AG04450 (cell line): ENCODE measurements at regions of chr2 and their contacts with region 1.

Region 1: GRCh38 chr2:170997893-170998597 is 69.0 kb downstream of the GORASP2 start:
- DNase-seq: no peak
- H3K4me3 ChIP-seq: no peak overlapping the region
- H3K27ac ChIP-seq: no peak overlapping the region
- H3K27me3 ChIP-seq: no peaks in the 10 kb centered on the region
- CTCF ChIP-seq: no peak

Region 2: GRCh38 chr2:170963386-170963785 is 34.7 kb before region 1 on chr2:
- CTCF ChIA-PET with region 1: no interaction called
- POLR2A ChIA-PET with region 1: no interaction called
- DNase-seq: no peak
- H3K4me3 ChIP-seq: no peak overlapping the region
- H3K27ac ChIP-seq: no peak overlapping the region
- H3K27me3 ChIP-seq: no peaks in the 10 kb centered on the region
- CTCF ChIP-seq: no peak

Region 3: GRCh38 chr2:170973492-170974303 is 24.3 kb before region 1 on chr2:
- CTCF ChIA-PET with region 1: no interaction called
- POLR2A ChIA-PET with region 1: interaction called, 12 read pairs
- DNase-seq: no peak
- H3K4me3 ChIP-seq: peak overlapping the region; percentile 71
- H3K27ac ChIP-seq: peak overlapping the region; percentile 73
- H3K27me3 ChIP-seq: no peaks in the 10 kb centered on the region
- CTCF ChIP-seq: peak; percentile 73

Region 4: DNA sequence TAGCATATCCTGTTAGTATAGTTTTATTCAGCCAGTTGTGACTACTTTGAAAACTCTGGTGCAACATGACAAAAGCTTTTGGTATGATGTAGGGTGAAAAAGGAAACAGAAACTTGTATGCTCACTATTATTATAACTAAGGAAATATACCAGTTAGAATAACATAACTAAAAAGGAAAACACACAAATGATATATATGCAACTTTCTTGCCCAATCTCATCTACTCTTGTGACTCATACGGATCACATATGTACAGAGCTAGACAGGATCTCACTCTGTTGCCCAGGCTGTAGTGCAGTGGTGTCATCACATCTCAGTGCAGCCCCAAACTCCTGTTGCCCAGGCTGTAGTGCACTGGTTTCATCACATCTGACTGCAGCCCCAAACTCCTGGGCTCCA is 175.0 kb after region 1 on chr2:
- CTCF ChIA-PET with region 1: no interaction called
- POLR2A ChIA-PET with region 1: no interaction called
- DNase-seq: no peak
- H3K4me3 ChIP-seq: no peak overlapping the region
- H3K27ac ChIP-seq: no peak overlapping the region
- H3K27me3 ChIP-seq: no peaks in the 10 kb centered on the region
- CTCF ChIP-seq: no peak